Dorsolateral prefrontal cortex (tissue), 120 donors: ENCODE measurements at regions of chr1 and their contacts with region 1.

Region 1: GRCh38 chr1:182391362-182392044 is at the start of gene GLUL:
- DNase-seq: peak; percentile 79 to 96 (median 93)
- H3K4me3 ChIP-seq: peak within 1 kb of the TSS; percentile 67 to 99 (median 92)
- H3K27ac ChIP-seq: peak within 1 kb of the TSS; percentile 92 to 100 (median 98)
- H3K27me3 ChIP-seq: peaks cover 0 to 4% (median 0%) of the 10 kb centered on the region in 45 donors
- CTCF ChIP-seq: peak in 16 of 56 donors; percentile 3 to 44 (median 14)
- total RNA-seq, gene GLUL: 1,265 to 6,769 (median 2,230) TPM

Region 2: GRCh38 chr1:182113879-182114626 is 277.4 kb before region 1 on chr1:
- intact Hi-C with region 1: loop called in 1 of 2 experiments (anchors 10 kb)
- DNase-seq: peak; percentile 14 to 92 (median 86)
- H3K4me3 ChIP-seq: peak overlapping the region in 39 of 59 donors; percentile 1 to 57 (median 26)
- H3K27ac ChIP-seq: peak overlapping the region; percentile 30 to 92 (median 82)
- H3K27me3 ChIP-seq: peaks cover 0 to 11% (median 0%) of the 10 kb centered on the region in 45 donors
- CTCF ChIP-seq: peak in 25 of 56 donors; percentile 5 to 45 (median 25)

Region 3: GRCh38 chr1:182301467-182302198 is 89.9 kb before region 1 on chr1:
- intact Hi-C with region 1: loop called (anchors 2 to 5 kb)
- DNase-seq: peak in 6 of 10 donors; percentile 27 to 67 (median 52)
- H3K4me3 ChIP-seq: peak overlapping the region in 1 of 59 donors; percentile 1
- H3K27ac ChIP-seq: peak overlapping the region; percentile 22 to 94 (median 86)
- H3K27me3 ChIP-seq: no peaks in the 10 kb centered on the region
- CTCF ChIP-seq: peak in 51 of 56 donors; percentile 25 to 72 (median 47)

Region 4: GRCh38 chr1:182426442-182427430 is 35.2 kb after region 1 on chr1:
- intact Hi-C with region 1: no loop called
- DNase-seq: no peak
- H3K4me3 ChIP-seq: no peak overlapping the region
- H3K27ac ChIP-seq: no peak overlapping the region
- H3K27me3 ChIP-seq: peaks cover 0 to 5% (median 0%) of the 10 kb centered on the region in 45 donors
- CTCF ChIP-seq: no peak